H1 (cell line): ENCODE measurements at regions of chr12 and their contacts with region 1.

Region 1: DNA sequence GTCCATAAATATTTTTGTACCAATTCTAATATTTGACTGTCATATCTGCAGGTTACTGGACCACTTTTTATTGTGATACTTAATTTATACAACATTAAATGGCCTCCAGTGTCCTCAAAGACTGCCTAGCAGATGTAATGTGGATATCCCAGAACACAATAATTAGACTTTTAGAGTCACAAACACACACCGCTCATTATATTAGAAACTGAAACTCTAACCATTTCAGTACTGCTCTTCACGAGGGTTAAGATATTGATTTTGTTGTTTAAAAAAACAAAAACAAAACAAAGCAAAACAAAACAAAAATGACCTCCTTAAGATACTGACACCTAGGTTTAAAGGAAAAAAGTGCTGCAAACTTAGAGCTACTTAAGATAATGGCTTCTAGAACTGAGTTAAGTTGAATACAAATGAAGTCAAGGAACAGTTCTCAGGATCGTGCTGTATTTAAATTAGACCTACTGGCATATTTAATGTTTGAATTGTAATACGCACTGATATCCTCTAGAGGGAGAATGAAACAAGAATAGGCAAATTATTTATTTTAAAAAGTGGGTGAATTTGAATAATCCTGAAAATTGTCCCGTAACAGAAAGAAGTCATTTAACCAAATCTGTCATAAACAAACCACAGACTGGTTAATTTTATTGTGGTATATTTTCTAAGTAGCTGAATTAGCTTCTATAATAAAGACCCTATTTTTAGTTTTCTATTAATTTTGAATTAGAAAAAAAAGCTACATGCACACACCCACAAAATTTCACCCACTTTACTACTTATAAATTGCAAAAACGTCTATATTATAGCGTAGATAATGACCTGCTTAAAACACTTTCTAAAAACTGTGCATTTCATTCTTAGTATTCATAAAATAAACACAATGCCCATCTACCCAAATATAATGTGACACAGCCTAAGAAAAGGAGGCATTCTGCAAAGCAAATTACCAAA is 395.2 kb upstream of the DCN start:
- DNase-seq: no peak
- H3K4me3 ChIP-seq: no peak overlapping the region
- H3K27ac ChIP-seq: no peak overlapping the region
- H3K4me1 ChIP-seq: no peaks in the 10 kb centered on the region; a peak in 1 of 7 replicates
- H3K27me3 ChIP-seq: no peaks in the 10 kb centered on the region
- CTCF ChIP-seq: peak in 1 of 3 experiments; percentile 7; a peak in 1 of 4 replicates
- EP300 ChIP-seq: no peak
- POLR2A ChIP-seq: no peak
- RAD21 ChIP-seq: peak in 1 of 2 experiments; percentile 17; a peak in 2 of 4 replicates

Region 2: GRCh38 chr12:91561958-91562875 is 15.6 kb before region 1 on chr12:
- CTCF ChIA-PET with region 1: interaction called, 15 read pairs
- POLR2A ChIA-PET with region 1: no interaction called
- DNase-seq: no peak
- H3K4me3 ChIP-seq: no peak overlapping the region
- H3K27ac ChIP-seq: no peak overlapping the region
- H3K4me1 ChIP-seq: 0 out of 7 replicates have a peak, but pooled peaks cover 0 to 2% (median 0%) of the 10 kb centered on the region in 4 experiments
- H3K27me3 ChIP-seq: no peaks in the 10 kb centered on the region
- CTCF ChIP-seq: peak in 1 of 3 experiments; percentile 7; a peak in 1 of 4 replicates
- EP300 ChIP-seq: no peak
- POLR2A ChIP-seq: no peak
- RAD21 ChIP-seq: no peak

Region 3: DNA sequence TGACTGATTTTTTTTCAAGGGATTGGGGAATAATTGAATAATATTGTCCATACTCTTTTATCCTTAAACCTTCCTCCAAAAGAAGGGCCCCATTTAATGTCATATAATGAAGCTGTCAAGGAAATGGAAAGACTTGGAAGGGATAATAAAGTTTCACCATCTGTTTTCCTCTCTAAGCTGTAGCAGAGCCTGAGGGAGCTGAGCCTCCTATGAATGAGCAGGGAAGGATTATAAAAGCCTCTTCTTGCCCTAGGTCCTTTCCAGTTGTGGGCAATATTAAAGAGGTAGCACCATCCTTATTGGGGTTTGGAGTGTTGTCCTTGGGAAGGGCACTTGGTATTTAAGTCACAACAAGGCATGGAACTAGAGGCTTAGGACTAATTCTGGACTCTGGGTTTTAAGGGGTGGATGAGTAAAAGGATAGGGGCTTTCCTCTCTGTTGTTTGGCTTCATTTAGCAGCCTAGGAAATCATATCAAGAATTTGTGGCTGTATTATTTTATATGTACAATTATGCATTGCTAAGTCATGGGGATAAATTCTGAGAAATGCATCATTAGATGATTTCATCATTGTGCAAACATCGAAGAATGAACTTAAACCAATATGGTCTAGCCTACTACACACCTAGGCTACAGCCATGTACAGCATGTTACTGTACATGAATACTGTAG is 13.2 kb after region 1 on chr12:
- CTCF ChIA-PET with region 1: interaction called, 11 read pairs
- POLR2A ChIA-PET with region 1: no interaction called
- DNase-seq: no peak
- H3K4me3 ChIP-seq: no peak overlapping the region
- H3K27ac ChIP-seq: no peak overlapping the region
- H3K4me1 ChIP-seq: no peaks in the 10 kb centered on the region
- H3K27me3 ChIP-seq: no peaks in the 10 kb centered on the region
- CTCF ChIP-seq: no peak
- EP300 ChIP-seq: no peak
- POLR2A ChIP-seq: no peak
- RAD21 ChIP-seq: no peak